IMR-90 (cell line): ENCODE measurements at regions of chr4 and their contacts with region 1.

Region 1: DNA sequence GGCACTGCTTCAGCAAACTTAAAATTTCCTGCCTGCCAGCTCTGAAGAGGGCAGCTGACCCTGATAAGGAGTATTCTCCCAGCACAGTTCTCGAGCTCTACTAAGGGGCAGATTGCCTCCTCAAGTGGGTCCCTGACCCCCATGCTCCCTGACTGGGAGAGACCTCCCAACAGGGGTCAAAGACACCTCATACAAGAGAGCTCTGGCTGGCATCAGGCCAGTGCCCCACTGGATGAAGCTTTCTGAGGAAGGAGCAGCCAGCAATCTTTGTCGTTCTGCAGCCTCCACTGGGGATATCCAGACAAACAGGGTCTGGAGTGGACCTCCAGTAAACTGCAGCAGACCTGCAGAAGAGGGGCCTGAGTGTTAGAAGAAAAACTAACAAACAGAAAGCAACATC is 1118.3 kb upstream of the ADGRL3 start:
- DNase-seq: no peak
- ATAC-seq: no peak
- H3K4me3 ChIP-seq: no peak overlapping the region
- H3K27ac ChIP-seq: no peak overlapping the region
- H3K4me1 ChIP-seq: no peaks in the 10 kb centered on the region
- H3K27me3 ChIP-seq: no peaks in the 10 kb centered on the region
- CTCF ChIP-seq: no peak
- POLR2A ChIP-seq: no peak
- RAD21 ChIP-seq: no peak

Region 2: DNA sequence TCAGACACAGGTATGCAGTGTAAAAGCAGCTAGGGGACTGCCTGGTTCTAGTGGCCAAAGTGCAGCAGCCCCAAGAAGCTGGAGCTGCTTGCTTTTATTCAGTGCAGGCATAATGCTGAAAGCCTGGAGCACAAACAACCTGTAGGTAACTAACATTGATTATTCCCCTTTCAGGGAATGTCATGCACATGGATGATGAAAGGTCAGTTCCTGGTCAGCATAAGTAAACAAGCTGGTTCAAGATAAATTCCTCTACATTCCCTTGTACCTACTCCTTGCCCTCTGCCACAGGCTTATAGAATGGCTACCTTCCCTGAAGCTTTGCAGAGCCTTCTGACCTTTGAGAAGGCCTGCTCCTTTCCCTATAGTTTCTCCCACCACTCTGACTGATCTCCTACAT is 200.2 kb before region 1 on chr4:
- CTCF ChIA-PET with region 1: no interaction called
- POLR2A ChIA-PET with region 1: no interaction called
- dilution Hi-C with region 1: no loop called
- in situ Hi-C with region 1: no loop called
- intact Hi-C with region 1: no loop called
- DNase-seq: no peak
- ATAC-seq: no peak
- H3K4me3 ChIP-seq: no peak overlapping the region
- H3K27ac ChIP-seq: no peak overlapping the region
- H3K4me1 ChIP-seq: no peaks in the 10 kb centered on the region
- H3K27me3 ChIP-seq: no peaks in the 10 kb centered on the region
- CTCF ChIP-seq: no peak
- POLR2A ChIP-seq: no peak
- RAD21 ChIP-seq: no peak

Region 3: DNA sequence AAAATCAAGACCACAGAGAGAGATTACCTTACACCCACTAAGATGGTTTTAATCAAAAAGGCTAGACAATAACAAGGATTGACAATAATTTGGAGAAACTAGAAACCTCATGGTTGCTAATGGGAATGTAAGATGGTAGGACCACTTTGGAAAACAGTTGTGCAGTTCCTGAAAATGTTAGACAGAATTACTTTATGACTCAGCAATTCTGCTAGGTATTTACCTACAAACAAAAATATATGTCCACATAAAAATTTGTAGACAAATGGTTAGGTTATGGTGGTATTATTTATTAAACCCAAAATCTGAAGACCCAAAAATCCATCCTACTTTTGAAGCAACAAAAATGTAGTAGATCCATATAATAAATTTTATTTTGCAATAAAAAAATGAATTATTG is 91.3 kb after region 1 on chr4:
- CTCF ChIA-PET with region 1: no interaction called
- POLR2A ChIA-PET with region 1: no interaction called
- dilution Hi-C with region 1: no loop called
- in situ Hi-C with region 1: no loop called
- intact Hi-C with region 1: no loop called
- DNase-seq: no peak
- ATAC-seq: no peak
- H3K4me3 ChIP-seq: no peak overlapping the region
- H3K27ac ChIP-seq: no peak overlapping the region
- H3K4me1 ChIP-seq: no peaks in the 10 kb centered on the region
- H3K27me3 ChIP-seq: no peaks in the 10 kb centered on the region
- CTCF ChIP-seq: no peak
- POLR2A ChIP-seq: no peak
- RAD21 ChIP-seq: no peak

Region 4: DNA sequence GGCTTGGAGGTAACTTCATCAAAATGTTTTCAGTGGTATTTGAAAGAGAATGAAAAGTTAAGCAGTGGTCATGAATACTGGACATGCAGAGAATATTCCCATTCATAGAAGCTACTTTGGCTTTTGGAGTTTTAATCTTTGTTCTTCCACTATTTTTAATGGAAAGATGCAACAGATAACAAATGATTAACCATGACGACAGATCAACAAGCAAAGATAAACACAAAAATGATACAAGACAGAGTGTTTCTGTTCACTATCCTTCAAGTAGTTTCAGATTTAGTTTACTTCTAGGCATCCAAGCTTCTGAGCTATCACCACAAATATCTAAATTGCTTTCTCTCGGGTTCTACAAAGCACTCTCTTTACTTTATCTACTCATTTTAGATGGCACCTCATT is 113.4 kb after region 1 on chr4:
- CTCF ChIA-PET with region 1: no interaction called
- POLR2A ChIA-PET with region 1: interaction called, 21 read pairs
- dilution Hi-C with region 1: no loop called
- in situ Hi-C with region 1: no loop called
- intact Hi-C with region 1: no loop called
- DNase-seq: no peak
- ATAC-seq: no peak
- H3K4me3 ChIP-seq: no peak overlapping the region
- H3K27ac ChIP-seq: no peak overlapping the region
- H3K4me1 ChIP-seq: no peaks in the 10 kb centered on the region
- H3K27me3 ChIP-seq: no peaks in the 10 kb centered on the region
- CTCF ChIP-seq: no peak
- POLR2A ChIP-seq: no peak
- RAD21 ChIP-seq: no peak